ENCODE measurements at regions of chr3 and their contacts with region 1.

Region 1: DNA sequence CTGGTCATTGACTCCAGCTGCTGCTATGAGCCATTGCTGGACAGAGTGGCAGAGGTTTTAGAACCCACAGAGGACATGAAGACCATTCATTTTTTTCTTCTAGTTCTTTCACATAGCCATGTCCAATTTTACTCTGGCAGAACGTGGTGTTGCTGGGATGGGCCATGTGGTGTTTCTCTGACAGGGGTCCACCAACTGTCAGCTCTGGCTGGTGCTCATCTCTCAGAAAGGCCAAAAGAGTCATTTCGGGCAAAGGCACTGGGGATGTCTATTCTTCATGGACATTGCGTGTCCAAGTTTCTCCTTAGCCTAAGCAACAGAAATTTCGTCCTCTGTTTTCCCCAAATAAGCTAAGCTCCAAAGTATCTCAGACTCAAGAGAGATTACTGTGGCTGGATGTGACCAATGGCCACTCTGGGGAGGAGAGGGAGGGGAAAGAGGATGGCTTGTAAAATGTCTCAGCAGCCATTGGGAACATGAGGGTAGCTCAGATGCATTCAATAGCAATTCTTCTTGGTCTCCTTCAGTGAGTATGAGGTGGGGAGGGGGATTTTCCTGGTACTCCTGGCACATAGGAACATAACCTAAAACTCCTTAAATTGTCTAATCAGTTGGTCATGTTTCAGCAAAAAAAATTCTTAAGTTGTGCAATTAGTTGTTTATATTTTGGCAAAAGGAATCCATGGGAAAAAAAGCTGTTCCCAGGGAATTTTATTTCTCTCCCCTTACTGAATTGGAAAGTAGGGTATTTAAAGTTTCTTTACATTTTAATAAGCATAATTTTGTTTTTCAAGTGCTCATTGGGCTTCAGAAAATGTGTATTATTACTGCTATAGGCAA is 131.6 kb upstream of the MITF start:
- DNase-seq: no peak
- ATAC-seq: no peak
- H3K4me3 ChIP-seq: no peak overlapping the region
- H3K27ac ChIP-seq: no peak overlapping the region
- H3K4me1 ChIP-seq: no peaks in the 10 kb centered on the region
- H3K27me3 ChIP-seq: peaks cover 0 to 5% (median 0%) of the 10 kb centered on the region in 3 donors
- CTCF ChIP-seq: no peak

Region 2: GRCh38 chr3:69665026-69665737 is 57.5 kb after region 1 on chr3:
- intact Hi-C with region 1: loop called in 1 of 2 experiments (anchors 10 kb)
- DNase-seq: no peak
- ATAC-seq: peak in 2 of 4 donors; percentile 52 to 55
- H3K4me3 ChIP-seq: no peak overlapping the region
- H3K27ac ChIP-seq: no peak overlapping the region
- H3K4me1 ChIP-seq: peaks cover 11% of the 10 kb centered on the region
- H3K27me3 ChIP-seq: no peaks in the 10 kb centered on the region
- CTCF ChIP-seq: no peak

Measured in psoas muscle (tissue), 8 donors.